ENCODE measurements at regions of chr19 and their contacts with region 1.

Region 1: GRCh38 chr19:39846176-39846677 is at the start of gene FBL:
- DNase-seq: peak; percentile 97
- H3K4me3 Mint-ChIP-seq: peak within 1 kb of the TSS; percentile 94
- H3K27ac Mint-ChIP-seq: peak within 1 kb of the TSS; percentile 95
- H3K4me1 Mint-ChIP-seq: peaks cover 46% of the 10 kb centered on the region
- H3K27me3 Mint-ChIP-seq: peaks cover 3% of the 10 kb centered on the region
- total RNA-seq, gene FBL: 526 and 528 TPM in 2 replicates

Region 2: GRCh38 chr19:39679056-39679790 is 167.0 kb before region 1 on chr19:
- intact Hi-C with region 1: loop called (anchors 1 kb)
- DNase-seq: peak; percentile 34
- H3K4me3 Mint-ChIP-seq: peak overlapping the region; percentile 71
- H3K27ac Mint-ChIP-seq: peak overlapping the region; percentile 78
- H3K4me1 Mint-ChIP-seq: peaks cover 53% of the 10 kb centered on the region
- H3K27me3 Mint-ChIP-seq: no peaks in the 10 kb centered on the region

Region 3: DNA sequence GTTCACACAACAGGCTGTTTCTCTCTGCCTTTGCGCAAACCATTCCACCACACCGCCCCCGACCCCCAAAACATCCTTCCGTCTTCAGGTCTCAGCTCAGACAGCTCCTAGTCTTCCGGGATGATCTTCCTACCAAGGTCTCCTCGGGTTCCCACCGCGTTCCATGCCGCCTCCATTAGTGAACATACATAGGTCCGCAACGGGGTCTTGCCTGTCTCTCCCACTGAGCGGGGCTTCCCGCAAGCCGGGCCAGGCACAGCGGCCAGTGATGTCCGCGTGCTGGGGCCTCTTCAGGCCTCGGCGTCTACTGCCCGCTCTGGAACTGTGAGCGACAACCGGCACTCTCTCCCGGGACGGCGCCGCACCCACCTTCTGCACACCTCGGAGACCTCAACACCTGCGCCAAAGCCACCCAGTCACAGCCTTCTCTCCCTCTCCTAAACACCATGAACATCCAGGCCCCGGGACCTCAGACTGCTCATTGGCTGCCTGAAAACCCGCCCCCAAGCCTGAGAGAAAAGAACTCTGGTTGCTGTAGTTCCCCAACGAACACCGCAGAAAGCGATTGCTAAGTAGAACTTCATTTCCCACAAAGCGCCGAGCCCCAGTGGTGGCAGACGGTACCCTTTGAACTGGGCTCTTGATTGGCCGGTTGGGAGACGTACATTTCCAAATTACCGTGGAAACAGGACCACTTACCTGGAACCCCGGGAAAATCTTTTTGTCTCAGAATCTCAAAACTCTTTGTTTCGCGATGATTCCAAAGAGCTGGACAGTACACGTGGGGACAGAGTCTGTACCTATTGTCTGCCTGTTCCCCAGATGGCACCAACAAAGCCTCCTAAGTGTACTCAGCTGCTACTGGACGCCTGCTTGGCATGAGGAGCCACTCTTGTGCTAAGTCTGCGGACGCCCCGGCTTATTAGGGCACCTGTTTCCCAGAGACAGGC is 21.8 kb before region 1 on chr19:
- intact Hi-C with region 1: loop called (anchors 1 kb)
- DNase-seq: peak; percentile 87
- H3K4me3 Mint-ChIP-seq: no peak overlapping the region
- H3K27ac Mint-ChIP-seq: no peak overlapping the region
- H3K4me1 Mint-ChIP-seq: peaks cover 6% of the 10 kb centered on the region
- H3K27me3 Mint-ChIP-seq: no peaks in the 10 kb centered on the region

Region 4: GRCh38 chr19:39996811-39997594 is 150.8 kb after region 1 on chr19 and contains the start of gene ZNF546:
- intact Hi-C with region 1: loop called (anchors 1 kb)
- DNase-seq: peak; percentile 87
- H3K4me3 Mint-ChIP-seq: peak within 1 kb of the TSS; percentile 99
- H3K27ac Mint-ChIP-seq: peak within 1 kb of the TSS; percentile 100
- H3K4me1 Mint-ChIP-seq: peaks cover 41% of the 10 kb centered on the region
- H3K27me3 Mint-ChIP-seq: no peaks in the 10 kb centered on the region
- total RNA-seq, gene ZNF546: 6.1 and 7.1 TPM in 2 replicates

Region 5: GRCh38 chr19:40190891-40191835 is 344.9 kb after region 1 on chr19 and contains the start of gene MAP3K10:
- intact Hi-C with region 1: loop called (anchors 5 kb)
- DNase-seq: peak; percentile 73
- H3K4me3 Mint-ChIP-seq: peak within 1 kb of the TSS; percentile 90
- H3K27ac Mint-ChIP-seq: peak within 1 kb of the TSS; percentile 93
- H3K4me1 Mint-ChIP-seq: peaks cover 34% of the 10 kb centered on the region
- H3K27me3 Mint-ChIP-seq: peaks cover 8% of the 10 kb centered on the region
- total RNA-seq, gene MAP3K10: 13.8 and 19.8 TPM in 2 replicates